Heart right ventricle (tissue), 16 donors: ENCODE measurements at regions of chr22 and their contacts with region 1.

Region 1: DNA sequence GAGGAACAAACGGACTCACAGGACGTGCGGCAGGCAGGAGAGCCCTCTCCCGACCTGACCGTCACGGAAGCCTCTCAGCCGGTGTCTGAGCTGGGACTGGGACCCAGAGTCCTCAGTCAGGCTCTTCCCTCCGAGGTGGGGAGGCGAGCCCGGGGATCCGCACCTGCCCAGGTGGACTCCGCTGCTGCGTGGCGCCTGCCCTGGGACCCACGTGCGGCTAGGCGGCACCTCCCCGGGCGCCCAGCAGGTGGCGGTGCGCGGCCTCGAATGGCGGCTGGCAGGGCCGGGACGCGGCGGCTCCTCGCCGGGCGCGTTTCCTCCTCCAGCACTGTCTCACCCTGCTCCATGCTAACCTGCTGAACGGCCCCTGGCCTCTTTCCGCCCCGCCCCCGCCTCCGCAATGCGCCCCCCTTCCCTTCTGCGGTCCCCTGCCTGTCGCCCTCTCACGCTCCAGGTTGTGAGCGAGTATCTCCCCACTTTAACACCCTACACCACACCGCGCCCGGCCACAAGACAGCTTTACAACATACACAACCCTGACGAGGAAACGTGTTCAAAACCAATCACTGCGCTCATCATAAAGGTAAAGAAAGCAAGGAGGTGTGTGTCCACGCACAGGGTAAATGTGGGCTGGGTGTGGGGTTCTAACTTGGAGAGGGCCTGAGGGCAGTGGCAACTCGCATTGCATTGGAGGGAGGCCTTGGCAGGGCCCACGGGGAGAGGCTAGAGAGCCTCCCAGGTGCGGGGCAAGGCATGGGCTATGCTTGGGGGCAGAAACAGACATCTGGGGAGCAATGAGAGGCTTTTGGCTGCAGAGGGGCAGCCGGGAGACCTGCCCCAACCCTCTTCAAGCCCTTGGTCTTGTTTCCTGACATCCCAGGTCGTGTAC is 25.9 kb upstream of the ATXN10 start:
- DNase-seq: peak; percentile 54 to 78
- ATAC-seq: peak; percentile 84 to 94 (median 92)
- H3K4me3 ChIP-seq: peak overlapping the region in 2 of 10 donors; percentile 1 to 6
- H3K27ac ChIP-seq: no peak overlapping the region
- H3K4me1 ChIP-seq: peaks cover 0 to 10% (median 6%) of the 10 kb centered on the region in 9 donors
- H3K27me3 ChIP-seq: peaks cover 0 to 53% (median 40%) of the 10 kb centered on the region in 7 donors
- CTCF ChIP-seq: peak; percentile 81 to 96 (median 93)

Region 2: GRCh38 chr22:45577746-45578523 is 67.8 kb before region 1 on chr22:
- intact Hi-C with region 1: loop called in 4 of 10 experiments (anchors 5 kb)
- DNase-seq: peak; percentile 71 to 86
- ATAC-seq: peak; percentile 69 to 87 (median 80)
- H3K4me3 ChIP-seq: no peak overlapping the region
- H3K27ac ChIP-seq: no peak overlapping the region
- H3K4me1 ChIP-seq: peaks cover 0 to 6% (median 0%) of the 10 kb centered on the region in 9 donors
- H3K27me3 ChIP-seq: peaks cover 0 to 42% (median 26%) of the 10 kb centered on the region in 7 donors
- CTCF ChIP-seq: peak; percentile 79 to 97 (median 92)

Region 3: GRCh38 chr22:45831394-45831793 is 185.6 kb after region 1 on chr22:
- intact Hi-C with region 1: loop called in 4 of 10 experiments (anchors 5 to 10 kb)
- DNase-seq: no peak
- ATAC-seq: no peak
- H3K4me3 ChIP-seq: no peak overlapping the region
- H3K27ac ChIP-seq: no peak overlapping the region
- H3K4me1 ChIP-seq: no peaks in the 10 kb centered on the region
- H3K27me3 ChIP-seq: no peaks in the 10 kb centered on the region
- CTCF ChIP-seq: peak in 6 of 9 donors; percentile 25 to 50 (median 31)

Region 4: GRCh38 chr22:45863981-45864751 is 218.4 kb after region 1 on chr22:
- intact Hi-C with region 1: loop called in 9 of 10 experiments (anchors 1 to 10 kb)
- DNase-seq: peak; percentile 63 to 75
- ATAC-seq: peak in 7 of 8 donors; percentile 31 to 70 (median 61)
- H3K4me3 ChIP-seq: no peak overlapping the region
- H3K27ac ChIP-seq: no peak overlapping the region
- H3K4me1 ChIP-seq: peaks cover 9 to 28% (median 19%) of the 10 kb centered on the region in 9 donors
- H3K27me3 ChIP-seq: peaks cover 16 to 57% (median 38%) of the 10 kb centered on the region in 7 donors
- CTCF ChIP-seq: peak; percentile 81 to 97 (median 92)

Region 5: DNA sequence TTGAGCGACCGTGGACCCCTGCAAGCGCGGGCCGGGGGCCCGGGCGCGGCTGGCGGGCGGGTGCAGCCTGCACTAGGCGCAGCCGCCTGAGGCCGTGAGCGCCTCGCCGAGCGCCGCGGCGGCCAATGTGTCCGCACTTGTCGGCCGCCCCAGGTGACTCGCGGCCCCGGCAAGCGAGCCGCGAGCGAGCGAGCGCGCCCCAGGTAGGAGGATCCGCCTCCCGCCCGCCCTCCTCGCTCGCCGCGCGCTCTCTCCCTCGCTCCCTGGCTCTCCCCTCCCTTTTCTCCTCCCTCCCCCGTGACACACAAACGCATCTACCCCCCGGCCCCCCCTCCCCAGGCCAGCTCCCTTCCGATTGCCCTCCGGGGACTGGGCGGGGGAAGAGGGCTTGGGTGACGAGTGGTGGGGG is 331.2 kb after region 1 on chr22 and contains the start of gene WNT7B:
- intact Hi-C with region 1: loop called in 2 of 10 experiments (anchors 2 kb)
- DNase-seq: no peak
- ATAC-seq: no peak
- H3K4me3 ChIP-seq: peak within 1 kb of the TSS in 8 of 10 donors; percentile 22 to 47 (median 32)
- H3K27ac ChIP-seq: no peak within 1 kb of the TSS
- H3K4me1 ChIP-seq: peaks cover 7 to 28% (median 22%) of the 10 kb centered on the region in 9 donors
- H3K27me3 ChIP-seq: peaks cover 38 to 67% (median 64%) of the 10 kb centered on the region in 7 donors
- CTCF ChIP-seq: no peak
- total RNA-seq, gene WNT7B: not detected